ENCODE measurements at regions of chr6 and their contacts with region 1.

Region 1: GRCh38 chr6:161079566-161080262 is 88.1 kb downstream of the MAP3K4 start:
- DNase-seq: peak; percentile 89
- H3K4me3 Mint-ChIP-seq: peak overlapping the region; percentile 35
- H3K27ac Mint-ChIP-seq: no peak overlapping the region
- H3K4me1 Mint-ChIP-seq: peaks cover 6% of the 10 kb centered on the region
- H3K27me3 Mint-ChIP-seq: no peaks in the 10 kb centered on the region

Region 2: GRCh38 chr6:161029195-161029809 is 50.4 kb before region 1 on chr6:
- CTCF ChIA-PET with region 1: no interaction called
- POLR2A ChIA-PET with region 1: no interaction called
- intact Hi-C with region 1: loop called (anchors 1 kb)
- DNase-seq: peak; percentile 28
- H3K4me3 Mint-ChIP-seq: no peak overlapping the region
- H3K27ac Mint-ChIP-seq: no peak overlapping the region
- H3K4me1 Mint-ChIP-seq: peaks cover 52% of the 10 kb centered on the region
- H3K27me3 Mint-ChIP-seq: no peaks in the 10 kb centered on the region

Region 3: DNA sequence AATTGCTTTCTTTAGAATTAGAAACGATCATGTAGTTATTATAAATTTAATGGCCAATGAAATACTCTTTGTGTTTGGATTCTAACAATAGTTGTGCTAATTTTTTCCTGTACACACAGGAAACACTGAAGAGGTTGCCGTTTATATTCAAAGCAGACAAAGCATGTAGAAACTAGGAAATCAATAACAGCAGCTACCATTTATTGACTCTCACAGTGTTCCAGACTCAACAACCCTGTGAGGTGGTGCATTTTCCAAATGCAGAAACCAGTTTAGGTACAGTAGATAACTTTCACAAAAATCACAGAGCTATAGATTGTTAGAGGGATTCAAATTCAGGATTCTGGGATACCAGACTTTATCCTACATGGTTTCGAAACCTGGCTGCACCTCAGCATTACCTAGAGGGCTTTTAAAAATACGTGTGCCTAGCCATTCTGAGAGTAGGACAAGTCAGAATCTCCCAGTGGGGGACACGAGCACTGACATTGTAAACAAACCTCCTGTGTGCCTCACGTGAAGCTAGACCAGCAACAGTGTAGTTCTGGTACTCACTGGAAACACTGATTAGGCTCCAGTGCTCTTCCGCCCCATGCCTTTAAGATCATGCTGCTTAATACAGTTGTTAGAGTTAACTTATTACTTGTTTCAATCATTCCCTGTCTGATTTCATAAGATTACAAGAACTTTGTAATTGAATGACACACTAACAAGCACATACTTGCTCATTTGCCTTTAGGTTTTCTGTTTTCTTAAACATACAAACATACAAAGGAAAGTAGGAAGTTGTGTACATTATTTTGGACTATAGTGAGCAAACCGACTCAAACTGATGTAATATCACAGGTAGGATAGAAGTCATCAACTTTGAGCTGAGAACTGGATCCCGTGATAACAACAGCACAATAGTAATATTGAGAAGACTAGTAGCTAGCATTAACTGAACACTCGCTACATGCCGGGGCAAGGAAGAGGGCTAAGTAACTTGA is 22.3 kb before region 1 on chr6:
- CTCF ChIA-PET with region 1: no interaction called
- POLR2A ChIA-PET with region 1: interaction called, 3 read pairs
- intact Hi-C with region 1: loop called (anchors 1 kb)
- DNase-seq: no peak
- H3K4me3 Mint-ChIP-seq: no peak overlapping the region
- H3K27ac Mint-ChIP-seq: no peak overlapping the region
- H3K4me1 Mint-ChIP-seq: peaks cover 30% of the 10 kb centered on the region
- H3K27me3 Mint-ChIP-seq: no peaks in the 10 kb centered on the region

Region 4: DNA sequence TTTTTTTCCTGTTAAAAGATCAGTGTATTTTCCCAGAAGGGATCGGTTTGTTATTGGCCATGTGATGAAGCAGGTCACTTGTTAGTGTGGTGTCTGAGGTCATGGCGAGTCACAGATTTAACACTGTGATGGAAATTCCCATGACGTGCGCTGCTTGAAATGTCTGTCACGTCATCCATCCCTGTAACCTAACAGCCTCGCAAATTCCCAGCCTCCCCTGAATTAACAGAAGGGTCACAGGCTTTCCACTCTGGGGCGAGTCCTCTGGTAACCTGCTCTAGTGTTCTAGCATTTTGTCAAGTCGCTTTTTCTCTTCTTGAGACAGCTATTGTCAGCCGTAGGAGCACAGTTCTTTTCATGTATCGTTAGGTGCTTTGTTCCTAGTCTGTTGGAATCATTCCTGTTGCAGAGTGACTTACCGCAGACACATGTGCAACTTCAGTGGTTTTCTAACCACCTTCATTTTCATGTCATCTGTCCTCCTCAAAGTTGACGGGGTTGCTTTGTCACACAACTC is 49.0 kb after region 1 on chr6:
- CTCF ChIA-PET with region 1: interaction called, 3 read pairs
- POLR2A ChIA-PET with region 1: no interaction called
- intact Hi-C with region 1: loop called (anchors 1 kb)
- DNase-seq: peak; percentile 62
- H3K4me3 Mint-ChIP-seq: no peak overlapping the region
- H3K27ac Mint-ChIP-seq: peak overlapping the region; percentile 85
- H3K4me1 Mint-ChIP-seq: peaks cover 16% of the 10 kb centered on the region
- H3K27me3 Mint-ChIP-seq: no peaks in the 10 kb centered on the region

Region 5: GRCh38 chr6:161139766-161140553 is 60.2 kb after region 1 on chr6:
- CTCF ChIA-PET with region 1: no interaction called
- POLR2A ChIA-PET with region 1: no interaction called
- intact Hi-C with region 1: no loop called
- DNase-seq: no peak
- H3K4me3 Mint-ChIP-seq: no peak overlapping the region
- H3K27ac Mint-ChIP-seq: no peak overlapping the region
- H3K4me1 Mint-ChIP-seq: no peaks in the 10 kb centered on the region
- H3K27me3 Mint-ChIP-seq: no peaks in the 10 kb centered on the region

Measured in activated CD4-positive, alpha-beta memory T cell treated with anti-CD3 and anti-CD28 coated beads for 36 hours (primary cell).